CD4-positive, alpha-beta T cell (primary cell): ENCODE measurements at regions of chr4 and their contacts with region 1.

Region 1: DNA sequence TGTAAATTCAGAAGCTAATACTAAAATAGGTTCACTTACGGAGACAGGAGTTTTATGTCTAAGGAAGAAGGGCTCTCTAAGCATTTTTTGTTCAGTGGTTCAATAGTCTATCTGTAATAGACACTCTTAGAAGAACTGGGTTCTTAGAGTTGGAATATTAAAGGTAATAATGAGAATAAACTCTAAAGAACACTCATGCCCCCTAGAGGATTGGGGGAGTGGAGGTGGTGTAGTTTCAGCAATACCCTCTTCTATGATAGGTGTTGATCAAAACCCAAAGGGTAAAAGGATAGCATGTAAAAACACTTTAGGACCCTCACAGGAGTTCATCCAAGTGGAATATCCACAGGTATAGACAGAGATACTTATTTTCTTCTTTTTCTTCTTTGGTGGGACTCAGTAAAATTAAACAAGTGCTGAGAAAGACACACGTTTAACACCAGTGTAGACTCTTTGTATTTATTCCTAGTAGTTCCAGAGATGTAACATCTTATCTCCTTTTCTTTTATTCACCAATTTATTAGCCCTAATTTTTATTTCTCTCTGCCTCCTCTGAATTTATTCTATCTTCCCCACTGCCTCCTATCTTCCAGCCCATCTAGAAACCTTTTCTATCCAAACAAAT is 25.7 kb upstream of the MND1 start:
- DNase-seq: peak in 7 of 14 experiments; percentile 3 to 66 (median 51)
- ATAC-seq: no peak
- H3K4me3 ChIP-seq: no peak overlapping the region
- H3K4me3 Mint-ChIP-seq: no peak overlapping the region
- H3K27ac ChIP-seq: no peak overlapping the region
- H3K27ac Mint-ChIP-seq: no peak overlapping the region
- H3K4me1 ChIP-seq: no peaks in the 10 kb centered on the region
- H3K4me1 Mint-ChIP-seq: no peaks in the 10 kb centered on the region
- H3K27me3 ChIP-seq: no peaks in the 10 kb centered on the region
- H3K27me3 Mint-ChIP-seq: peaks cover 3% of the 10 kb centered on the region
- CTCF ChIP-seq: peak; percentile 61

Region 2: GRCh38 chr4:152843481-152844090 is 475.2 kb before region 1 on chr4:
- CTCF ChIA-PET with region 1: no interaction called
- POLR2A ChIA-PET with region 1: no interaction called
- intact Hi-C with region 1: loop called (anchors 10 kb)
- DNase-seq: no peak
- ATAC-seq: no peak
- H3K4me3 ChIP-seq: no peak overlapping the region
- H3K4me3 Mint-ChIP-seq: no peak overlapping the region
- H3K27ac ChIP-seq: no peak overlapping the region
- H3K27ac Mint-ChIP-seq: no peak overlapping the region
- H3K4me1 ChIP-seq: no peaks in the 10 kb centered on the region
- H3K4me1 Mint-ChIP-seq: peaks cover 26% of the 10 kb centered on the region
- H3K27me3 ChIP-seq: no peaks in the 10 kb centered on the region
- H3K27me3 Mint-ChIP-seq: no peaks in the 10 kb centered on the region
- CTCF ChIP-seq: no peak

Region 3: DNA sequence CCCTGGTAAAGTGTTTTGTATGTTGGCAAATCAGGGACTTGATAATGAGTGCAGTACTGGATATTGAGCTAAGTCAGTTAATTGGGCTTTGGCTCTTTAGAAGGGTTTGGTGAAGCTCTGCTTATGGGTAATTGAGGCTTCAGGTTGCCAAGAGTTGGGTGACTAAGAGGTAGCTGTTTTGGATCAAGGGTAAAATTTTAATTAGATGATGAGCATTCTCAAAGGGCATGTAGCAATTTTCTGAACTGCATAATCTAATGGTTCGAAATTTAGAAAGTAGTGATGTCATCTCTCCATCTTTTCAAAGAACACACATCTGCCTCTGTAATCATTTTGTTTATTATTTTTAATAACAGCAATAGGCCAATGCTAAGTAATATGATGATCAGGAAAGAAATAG is 120.1 kb before region 1 on chr4:
- CTCF ChIA-PET with region 1: no interaction called
- POLR2A ChIA-PET with region 1: no interaction called
- intact Hi-C with region 1: no loop called
- DNase-seq: no peak
- ATAC-seq: no peak
- H3K4me3 ChIP-seq: no peak overlapping the region
- H3K4me3 Mint-ChIP-seq: no peak overlapping the region
- H3K27ac ChIP-seq: no peak overlapping the region
- H3K27ac Mint-ChIP-seq: no peak overlapping the region
- H3K4me1 ChIP-seq: peaks cover 3% of the 10 kb centered on the region
- H3K4me1 Mint-ChIP-seq: no peaks in the 10 kb centered on the region
- H3K27me3 ChIP-seq: no peaks in the 10 kb centered on the region
- H3K27me3 Mint-ChIP-seq: no peaks in the 10 kb centered on the region
- CTCF ChIP-seq: no peak

Region 4: GRCh38 chr4:153611679-153612078 is 292.9 kb after region 1 on chr4:
- CTCF ChIA-PET with region 1: no interaction called
- POLR2A ChIA-PET with region 1: no interaction called
- intact Hi-C with region 1: no loop called
- DNase-seq: no peak
- ATAC-seq: no peak
- H3K4me3 ChIP-seq: no peak overlapping the region
- H3K4me3 Mint-ChIP-seq: no peak overlapping the region
- H3K27ac ChIP-seq: no peak overlapping the region
- H3K27ac Mint-ChIP-seq: peak overlapping the region; percentile 41
- H3K4me1 ChIP-seq: peaks cover 19% of the 10 kb centered on the region
- H3K4me1 Mint-ChIP-seq: peaks cover 58% of the 10 kb centered on the region
- H3K27me3 ChIP-seq: no peaks in the 10 kb centered on the region
- H3K27me3 Mint-ChIP-seq: no peaks in the 10 kb centered on the region
- CTCF ChIP-seq: no peak